GM18951 (cell line): ENCODE measurements at regions of chr3 and their contacts with region 1.

Region 1: DNA sequence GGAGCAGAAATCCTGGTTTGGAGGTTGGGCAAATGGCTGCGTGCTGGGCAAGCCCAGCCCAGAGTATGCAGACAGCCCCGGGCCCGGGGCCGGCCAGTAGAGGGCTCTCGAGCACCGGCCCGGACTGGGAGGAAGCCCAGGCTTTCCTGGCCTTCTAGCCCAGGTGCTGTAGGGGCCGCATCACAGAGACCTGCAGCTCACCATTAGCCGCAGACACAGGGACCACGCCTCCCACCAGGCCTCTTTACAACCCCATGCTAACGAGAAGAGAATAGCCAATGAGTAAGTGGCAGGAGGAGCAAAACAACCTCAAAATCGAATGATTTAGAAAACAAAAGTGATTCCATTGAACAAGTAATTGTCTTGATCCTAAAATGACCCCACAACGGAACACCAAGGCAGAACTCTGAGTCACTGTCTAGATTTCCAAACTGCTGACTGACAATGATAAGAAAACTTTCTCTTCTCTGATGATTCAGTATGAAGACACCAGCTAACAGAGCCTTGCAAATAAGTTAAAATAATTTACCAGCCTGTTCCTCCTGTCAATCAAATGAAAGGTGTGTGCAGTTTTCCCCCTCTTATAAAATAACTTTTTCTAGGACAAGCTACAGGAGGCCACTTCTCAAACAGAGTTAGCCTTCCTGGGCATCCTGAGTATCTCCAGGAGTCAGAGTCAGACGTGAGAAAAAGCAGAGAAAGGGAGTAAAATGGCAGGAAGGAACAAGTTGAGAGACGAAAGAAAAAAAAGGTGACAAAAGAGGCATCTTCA is 102.2 kb downstream of the DGKG start:
- POLR2A ChIP-seq: no peak

Region 2: DNA sequence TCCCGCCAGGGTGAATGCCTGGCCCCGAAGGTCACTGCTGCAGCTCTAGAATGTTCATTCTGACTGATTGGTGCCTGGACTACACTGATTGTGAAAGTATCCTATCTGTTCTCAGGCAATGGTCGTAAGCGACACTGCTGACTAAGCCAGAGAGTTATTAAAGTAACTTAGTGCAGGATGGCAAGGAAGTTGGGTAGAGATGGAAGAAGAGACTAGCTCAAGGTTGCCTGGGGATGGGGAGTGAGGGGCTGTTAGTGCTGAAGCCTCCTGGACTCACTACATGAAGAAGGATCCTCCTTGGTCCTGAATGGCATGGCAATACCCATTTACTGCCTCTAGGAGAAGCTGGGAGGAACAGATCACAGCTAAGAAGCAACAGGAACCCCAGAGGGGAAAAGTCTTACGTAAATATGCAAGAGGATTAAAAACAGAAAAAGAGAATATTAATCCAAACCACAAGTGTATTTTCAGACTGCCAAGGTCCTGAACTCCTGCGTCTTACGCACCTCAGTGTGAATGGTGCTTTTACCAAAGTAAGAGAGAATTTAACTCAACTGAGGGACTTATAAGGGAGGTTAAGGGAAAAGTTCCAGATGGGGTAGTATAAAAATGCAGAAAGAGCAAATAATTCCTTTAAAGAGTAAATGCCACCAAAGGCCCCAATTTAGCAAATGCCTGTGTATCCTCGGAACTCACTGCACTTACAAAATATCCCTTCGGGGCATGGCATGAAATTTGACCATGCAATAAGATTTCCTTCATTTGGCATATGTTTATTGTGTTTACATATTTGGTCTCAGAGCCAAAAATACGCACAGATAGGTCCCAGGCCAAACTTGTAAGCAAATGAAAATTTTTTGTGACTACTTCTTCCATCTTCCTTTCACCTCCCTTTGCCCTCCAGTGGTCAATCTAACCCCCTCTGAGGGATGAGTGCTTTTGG is 166.3 kb after region 1 on chr3:
- in situ Hi-C with region 1: no loop called
- POLR2A ChIP-seq: no peak

Region 3: GRCh38 chr3:186551387-186551786 is 291.6 kb after region 1 on chr3:
- in situ Hi-C with region 1: loop called (anchors 10 kb)
- POLR2A ChIP-seq: no peak